ENCODE measurements at regions of chr12 and their contacts with region 1.

Region 1: GRCh38 chr12:79706215-79706614 is 15.5 kb upstream of the PAWR start:
- DNase-seq: no peak
- ATAC-seq: no peak

Region 2: DNA sequence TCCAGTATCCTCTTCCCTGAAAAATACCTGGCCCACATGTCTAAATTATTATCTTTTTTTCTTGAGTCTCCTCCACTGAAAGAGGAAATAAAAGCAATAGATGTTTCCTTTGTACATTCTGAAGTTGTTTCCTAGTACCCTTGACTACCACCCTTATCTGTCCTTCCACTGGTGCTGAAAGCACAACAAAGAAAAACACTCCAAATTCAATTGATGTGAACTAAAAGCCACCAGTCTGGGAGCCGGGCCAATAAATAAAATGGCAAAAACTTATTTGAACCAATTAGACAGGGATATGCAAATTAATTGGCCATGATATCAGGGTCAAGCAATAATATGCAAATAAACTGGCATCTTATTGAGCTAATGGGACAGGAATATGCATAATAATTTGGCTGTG is 345.9 kb before region 1 on chr12:
- intact Hi-C with region 1: no loop called
- DNase-seq: no peak
- ATAC-seq: no peak

Region 3: DNA sequence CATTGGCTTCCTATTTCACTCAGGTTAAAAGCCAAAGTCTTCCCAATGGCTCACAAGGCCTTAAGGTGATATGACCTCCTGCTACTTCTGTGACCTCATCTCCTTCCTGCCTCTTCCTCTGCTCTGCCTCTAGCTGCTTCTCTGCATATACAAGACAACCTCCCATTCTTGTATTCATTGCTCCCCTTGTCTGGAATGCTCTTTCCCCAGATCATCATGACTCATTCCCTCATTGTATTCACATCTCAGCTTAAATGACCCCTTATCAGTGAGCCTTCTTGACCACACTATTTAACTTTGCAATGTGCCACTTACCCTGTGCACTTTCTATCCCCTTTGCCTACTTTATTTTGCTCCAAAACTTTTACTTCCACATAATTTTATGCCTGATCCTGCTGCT is 138.5 kb after region 1 on chr12:
- intact Hi-C with region 1: no loop called
- DNase-seq: no peak
- ATAC-seq: no peak

Region 4: DNA sequence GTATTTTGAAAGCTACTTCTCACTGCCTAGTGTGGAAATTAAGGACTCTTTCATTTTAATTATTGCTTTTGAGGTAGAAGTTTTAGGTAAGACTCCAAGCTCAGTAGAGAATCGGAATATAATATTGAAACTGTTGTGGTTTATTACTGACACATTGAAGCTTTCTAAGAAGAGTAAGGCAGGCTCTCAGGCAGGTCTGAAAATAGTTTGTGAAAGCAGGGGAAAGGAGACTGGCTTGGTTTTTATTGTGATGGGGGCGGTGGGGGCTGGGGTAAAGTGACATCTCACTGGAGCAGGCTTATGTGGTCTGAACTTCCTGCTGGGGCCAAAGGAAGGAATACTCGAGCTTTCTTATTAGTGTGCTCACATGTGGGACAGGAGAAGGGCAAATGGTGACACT is 472.6 kb after region 1 on chr12:
- intact Hi-C with region 1: loop called (anchors 10 kb)
- DNase-seq: no peak
- ATAC-seq: no peak